GM12878 (cell line): ENCODE measurements at regions of chr19 and their contacts with region 1.

Region 1: DNA sequence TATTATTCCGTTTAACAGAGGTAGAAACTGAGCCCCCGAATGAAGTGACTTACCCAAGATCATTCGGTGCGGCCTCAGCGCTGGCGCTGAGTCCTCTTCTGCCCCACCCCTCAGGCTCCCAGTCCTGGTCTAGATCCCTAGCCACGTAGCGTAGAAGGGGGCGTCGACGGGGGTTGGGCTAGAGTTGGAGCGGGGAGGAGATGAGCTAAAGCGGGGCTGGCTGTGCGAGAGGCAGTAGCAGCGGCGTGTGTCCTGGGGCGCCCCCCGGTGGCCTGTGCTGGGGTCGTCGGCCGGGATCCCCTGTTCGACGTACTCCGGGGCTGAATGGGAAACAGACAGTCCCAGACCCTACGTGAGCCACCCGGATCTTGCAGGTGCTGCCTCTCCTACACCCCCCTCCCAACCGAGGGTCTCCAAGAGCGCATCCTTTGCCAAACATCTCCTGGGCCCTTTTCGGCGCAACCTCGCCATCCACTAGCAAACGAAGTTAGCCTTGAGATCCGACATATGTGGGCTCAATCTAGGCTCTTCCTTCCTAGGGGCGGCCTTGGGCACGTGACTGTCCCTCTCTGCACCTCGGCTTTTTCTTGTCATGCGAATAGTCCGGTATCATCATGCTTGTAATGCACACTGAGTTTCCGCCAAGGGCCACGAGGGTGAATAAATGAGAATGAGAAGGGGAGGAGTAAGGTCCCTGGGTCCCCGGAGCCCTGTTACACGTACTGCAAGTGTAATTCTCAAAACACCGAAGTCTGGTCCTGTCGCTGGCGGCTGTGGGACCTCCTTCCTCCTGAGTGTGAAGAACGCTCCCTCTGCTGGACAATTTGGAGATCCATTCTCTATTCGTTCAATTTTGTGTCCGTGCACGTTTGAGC is 47.7 kb downstream of the CYP4F22 start:
- DNase-seq: peak; percentile 65
- ATAC-seq: peak; percentile 95
- H3K4me3 ChIP-seq: peak overlapping the region; percentile 66; the same call in 1 of the 2 replicates
- H3K27ac ChIP-seq: no peak overlapping the region
- H3K4me1 ChIP-seq: peaks cover 5% of the 10 kb centered on the region
- H3K27me3 ChIP-seq: no peaks in the 10 kb centered on the region
- CTCF ChIP-seq: peak; percentile 82 to 96 (median 86)
- EP300 ChIP-seq: no peak
- POLR2A ChIP-seq: no peak
- RAD21 ChIP-seq: peak; percentile 89

Region 2: DNA sequence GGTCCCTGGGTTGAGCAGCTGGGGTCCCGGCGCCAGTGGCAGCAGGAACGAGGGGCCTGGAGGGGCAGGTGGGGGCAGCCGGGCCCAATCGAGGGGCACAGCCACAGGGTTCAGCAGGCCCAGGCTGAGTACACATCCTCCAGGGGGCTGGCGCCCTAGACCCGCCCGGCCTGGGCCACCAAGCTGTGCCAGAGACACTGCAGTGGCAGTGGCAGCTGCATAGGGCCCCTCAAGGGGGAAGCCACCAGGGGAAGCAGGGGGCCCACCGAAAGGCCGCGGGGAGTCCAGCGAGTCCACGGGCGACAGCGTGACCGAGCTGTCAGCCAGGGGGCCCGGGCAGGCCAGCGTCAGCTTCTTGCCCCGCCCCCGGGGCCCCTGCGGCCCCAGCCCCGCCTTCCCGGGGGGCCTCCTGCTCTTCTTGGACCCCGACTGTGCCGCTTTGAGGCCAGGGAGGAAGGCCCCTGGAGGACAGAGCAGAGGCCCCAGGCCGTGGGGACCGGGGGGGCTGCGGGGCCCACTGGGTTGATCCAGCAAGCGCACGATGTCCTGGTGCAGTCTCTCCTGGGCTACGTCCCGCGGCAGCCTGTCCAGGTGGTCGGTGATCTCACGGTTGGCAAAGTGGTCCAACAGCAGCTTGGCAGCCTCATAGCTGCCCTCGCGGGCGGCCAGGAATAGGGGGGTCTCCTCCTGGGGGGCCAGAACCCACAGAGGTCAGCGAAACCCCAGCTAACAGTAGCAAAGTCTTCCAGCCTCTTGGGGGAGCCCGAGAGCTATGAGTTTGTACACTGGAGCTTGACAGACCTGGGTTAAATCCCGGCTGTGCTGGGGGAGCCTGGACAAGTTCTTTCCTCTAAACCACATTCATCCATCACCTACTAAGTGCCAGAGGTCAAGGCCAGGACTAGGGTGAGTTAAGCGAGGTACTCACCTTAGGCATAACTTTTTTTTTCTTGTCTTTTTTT is 394.7 kb before region 1 on chr19:
- CTCF ChIA-PET with region 1: interaction called, 5 read pairs
- POLR2A ChIA-PET with region 1: no interaction called
- RAD21 ChIA-PET with region 1: interaction called, 4 read pairs
- SMC1A ChIA-PET with region 1: interaction called, 4 read pairs
- in situ Hi-C with region 1: no loop called
- intact Hi-C with region 1: loop called (anchors 1 kb)
- DNase-seq: no peak
- ATAC-seq: peak; percentile 66
- H3K4me3 ChIP-seq: no peak overlapping the region
- H3K27ac ChIP-seq: no peak overlapping the region
- H3K4me1 ChIP-seq: no peaks in the 10 kb centered on the region
- H3K27me3 ChIP-seq: no peaks in the 10 kb centered on the region
- CTCF ChIP-seq: peak; percentile 57 to 62 (median 61)
- EP300 ChIP-seq: no peak
- POLR2A ChIP-seq: no peak
- RAD21 ChIP-seq: peak; percentile 58

Region 3: GRCh38 chr19:15264061-15264932 is 291.7 kb before region 1 on chr19:
- CTCF ChIA-PET with region 1: interaction called, 6 read pairs
- POLR2A ChIA-PET with region 1: no interaction called
- RAD21 ChIA-PET with region 1: no interaction called
- SMC1A ChIA-PET with region 1: no interaction called
- in situ Hi-C with region 1: loop called (anchors 5 kb)
- intact Hi-C with region 1: loop called (anchors 1 kb)
- DNase-seq: no peak
- ATAC-seq: peak; percentile 83
- H3K4me3 ChIP-seq: no peak overlapping the region
- H3K27ac ChIP-seq: no peak overlapping the region
- H3K4me1 ChIP-seq: no peaks in the 10 kb centered on the region
- H3K27me3 ChIP-seq: no peaks in the 10 kb centered on the region
- CTCF ChIP-seq: peak; percentile 74 to 79 (median 78)
- EP300 ChIP-seq: no peak
- POLR2A ChIP-seq: peak; percentile 8; the same call in 1 of the 2 replicates
- RAD21 ChIP-seq: peak; percentile 76

Region 4: GRCh38 chr19:15418588-15419412 is 137.2 kb before region 1 on chr19 and contains the start of gene AKAP8L:
- CTCF ChIA-PET with region 1: interaction called, 85 read pairs
- POLR2A ChIA-PET with region 1: interaction called, 3 read pairs
- RAD21 ChIA-PET with region 1: interaction called, 31 read pairs
- SMC1A ChIA-PET with region 1: interaction called, 27 read pairs
- in situ Hi-C with region 1: no loop called
- intact Hi-C with region 1: loop called (anchors 1 kb)
- DNase-seq: peak; percentile 99
- ATAC-seq: peak; percentile 99
- H3K4me3 ChIP-seq: peak within 1 kb of the TSS; percentile 98
- H3K27ac ChIP-seq: peak within 1 kb of the TSS; percentile 88
- H3K4me1 ChIP-seq: peaks cover 8% of the 10 kb centered on the region
- H3K27me3 ChIP-seq: no peaks in the 10 kb centered on the region
- CTCF ChIP-seq: peak; percentile 87 to 93 (median 89)
- EP300 ChIP-seq: 0 out of 4 replicates have a peak, but pooled peaks of 1 of the 2 experiments have one; percentile 27
- POLR2A ChIP-seq: peak; percentile 97
- RAD21 ChIP-seq: peak; percentile 77
- polyA plus RNA-seq, gene AKAP8L: 0.66 to 3.8 TPM

Region 5: GRCh38 chr19:15432629-15433518 is 123.1 kb before region 1 on chr19:
- CTCF ChIA-PET with region 1: no interaction called
- POLR2A ChIA-PET with region 1: no interaction called
- RAD21 ChIA-PET with region 1: no interaction called
- SMC1A ChIA-PET with region 1: interaction called, 4 read pairs
- in situ Hi-C with region 1: loop called (anchors 5 kb)
- intact Hi-C with region 1: loop called (anchors 5 kb)
- DNase-seq: peak; percentile 36
- ATAC-seq: peak; percentile 88
- H3K4me3 ChIP-seq: peak overlapping the region; percentile 94
- H3K27ac ChIP-seq: peak overlapping the region; percentile 83
- H3K4me1 ChIP-seq: peaks cover 10% of the 10 kb centered on the region
- H3K27me3 ChIP-seq: no peaks in the 10 kb centered on the region
- CTCF ChIP-seq: no peak
- EP300 ChIP-seq: no peak; a peak in 1 of 4 replicates
- POLR2A ChIP-seq: peak; percentile 87
- RAD21 ChIP-seq: no peak

Region 6: GRCh38 chr19:15532779-15533521 is 23.0 kb before region 1 on chr19:
- CTCF ChIA-PET with region 1: no interaction called
- POLR2A ChIA-PET with region 1: no interaction called
- RAD21 ChIA-PET with region 1: no interaction called
- SMC1A ChIA-PET with region 1: no interaction called
- in situ Hi-C with region 1: no loop called
- intact Hi-C with region 1: no loop called
- DNase-seq: peak; percentile 25
- ATAC-seq: no peak
- H3K4me3 ChIP-seq: no peak overlapping the region
- H3K27ac ChIP-seq: no peak overlapping the region
- H3K4me1 ChIP-seq: no peaks in the 10 kb centered on the region
- H3K27me3 ChIP-seq: no peaks in the 10 kb centered on the region; a peak in 1 of 4 replicates
- CTCF ChIP-seq: no peak
- EP300 ChIP-seq: no peak
- POLR2A ChIP-seq: no peak
- RAD21 ChIP-seq: no peak

Region 7: GRCh38 chr19:15595069-15595468 is 39.1 kb after region 1 on chr19:
- CTCF ChIA-PET with region 1: no interaction called
- POLR2A ChIA-PET with region 1: no interaction called
- RAD21 ChIA-PET with region 1: no interaction called
- SMC1A ChIA-PET with region 1: no interaction called
- in situ Hi-C with region 1: no loop called
- intact Hi-C with region 1: no loop called
- DNase-seq: no peak
- ATAC-seq: no peak
- H3K4me3 ChIP-seq: no peak overlapping the region
- H3K27ac ChIP-seq: no peak overlapping the region
- H3K4me1 ChIP-seq: no peaks in the 10 kb centered on the region
- H3K27me3 ChIP-seq: no peaks in the 10 kb centered on the region
- CTCF ChIP-seq: no peak
- EP300 ChIP-seq: no peak
- POLR2A ChIP-seq: no peak
- RAD21 ChIP-seq: no peak